GM18951 (cell line): ENCODE measurements at regions of chr1 and their contacts with region 1.

Region 1: DNA sequence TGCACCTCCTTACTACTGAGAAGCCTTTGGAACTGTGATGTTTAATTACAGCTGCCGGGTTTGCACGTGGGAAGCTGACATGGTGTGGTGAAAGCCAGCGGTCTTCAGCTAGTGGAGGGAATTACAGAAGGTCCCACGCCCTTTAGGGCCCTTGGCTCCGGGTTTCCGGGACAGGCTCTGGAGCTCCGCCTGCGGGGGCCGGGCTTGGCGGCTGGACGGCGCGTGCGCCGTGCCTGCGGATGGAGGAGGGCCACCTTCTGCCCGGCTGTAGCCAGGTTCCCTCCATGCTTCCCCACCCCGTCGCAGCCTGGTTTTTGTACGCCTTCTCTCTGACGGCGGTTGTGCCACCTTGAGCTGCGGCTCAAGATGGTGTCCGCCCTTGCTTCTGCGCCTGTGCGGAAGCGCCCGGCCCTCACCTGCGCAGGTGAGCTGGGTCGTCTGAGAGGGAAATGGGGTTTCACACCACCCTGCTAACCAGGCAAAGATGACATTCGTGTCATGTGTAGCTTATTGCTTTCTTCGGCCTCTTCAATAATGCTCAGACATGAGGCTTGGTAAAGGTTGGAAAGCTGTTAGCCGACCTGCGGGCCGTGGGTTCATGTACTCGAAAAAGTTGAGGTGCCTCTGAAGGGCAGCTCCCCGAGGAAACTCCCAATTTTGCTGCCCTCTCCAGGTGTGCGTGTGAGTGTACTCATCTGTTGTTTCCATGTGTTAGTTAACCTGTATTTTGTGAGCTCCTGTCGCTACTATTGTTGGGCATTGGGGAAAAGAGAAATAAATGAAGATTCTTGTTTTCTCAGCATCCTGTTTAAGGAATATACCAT is 36.6 kb upstream of the OPRD1 start:
- POLR2A ChIP-seq: peak; percentile 50

Region 2: DNA sequence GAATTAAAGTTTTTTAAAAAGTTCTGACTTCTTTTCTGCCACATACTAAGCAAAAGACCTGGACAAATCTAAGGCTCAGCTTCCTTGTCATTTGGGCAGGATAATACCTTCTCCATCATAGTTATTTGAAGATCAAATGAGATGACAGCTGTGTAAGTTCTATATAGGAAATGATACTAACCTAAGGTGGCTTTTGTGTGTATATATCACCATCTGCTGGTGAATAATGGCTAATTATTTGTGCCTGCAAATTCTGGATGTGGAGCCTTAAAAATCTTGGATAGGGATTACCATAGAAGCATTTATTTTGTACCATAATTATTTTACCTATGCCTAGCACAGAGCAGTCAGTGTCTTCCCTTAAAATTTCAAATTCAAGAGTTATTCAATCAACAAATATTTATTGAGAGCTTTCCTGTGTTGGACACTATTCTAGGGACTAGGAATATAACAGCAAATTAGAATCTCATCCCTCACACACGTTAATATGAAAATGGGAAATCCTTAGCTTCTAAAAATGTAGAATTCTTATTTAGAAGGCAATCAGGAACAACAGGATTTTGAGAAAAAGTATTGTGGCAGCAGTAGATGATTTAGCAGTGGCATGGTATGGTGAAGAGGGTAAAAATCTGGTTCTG is 258.6 kb after region 1 on chr1:
- in situ Hi-C with region 1: loop called (anchors 25 kb)
- POLR2A ChIP-seq: no peak

Region 3: GRCh38 chr1:29181413-29182225 is 406.3 kb after region 1 on chr1 and contains the start of gene SRSF4:
- in situ Hi-C with region 1: loop called (anchors 25 kb)
- POLR2A ChIP-seq: peak; percentile 83